ENCODE measurements at regions of chr12 and their contacts with region 1.

Region 1: DNA sequence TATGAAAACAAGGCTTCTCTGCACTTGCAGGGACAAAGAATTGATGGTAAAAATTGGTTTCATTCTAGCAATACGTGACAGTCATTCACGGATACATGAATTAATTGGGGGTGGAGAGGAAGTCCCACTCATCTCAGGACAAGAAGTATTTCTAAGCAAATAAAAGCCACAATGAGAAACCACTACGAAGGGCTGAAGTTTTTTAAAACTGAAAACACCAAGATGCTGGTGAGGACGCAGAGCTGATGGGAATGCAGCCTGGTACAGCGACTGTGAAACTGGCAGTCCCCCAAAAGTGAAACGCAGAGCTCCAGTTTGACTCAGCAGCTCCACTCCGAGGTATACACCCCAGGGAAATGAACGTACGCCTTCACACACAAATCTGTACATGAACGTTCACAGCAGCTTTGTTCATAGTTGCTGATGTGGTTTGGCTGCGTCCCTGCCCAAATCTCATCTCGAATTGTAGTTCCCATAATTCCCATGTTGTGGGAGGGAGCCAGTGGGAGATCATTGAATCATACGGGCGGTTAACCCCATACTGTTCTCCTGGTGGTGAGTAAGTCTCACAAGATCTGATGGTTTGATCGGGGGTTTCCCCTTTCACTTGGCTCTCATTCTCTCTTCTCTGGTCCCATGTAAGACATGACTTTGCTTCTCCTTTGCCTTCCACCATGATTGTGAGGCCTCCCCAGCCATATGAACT is 89.0 kb downstream of the SCARB1 start:
- DNase-seq: peak; percentile 96
- H3K4me3 Mint-ChIP-seq: no peak overlapping the region
- H3K27ac Mint-ChIP-seq: peak overlapping the region; percentile 93
- H3K4me1 Mint-ChIP-seq: peaks cover 40% of the 10 kb centered on the region
- H3K27me3 Mint-ChIP-seq: peaks cover 15% of the 10 kb centered on the region

Region 2: GRCh38 chr12:124453419-124454351 is 320.9 kb before region 1 on chr12:
- CTCF ChIA-PET with region 1: interaction called, 3 read pairs
- intact Hi-C with region 1: loop called (anchors 1 kb)
- DNase-seq: peak; percentile 93
- H3K4me3 Mint-ChIP-seq: no peak overlapping the region
- H3K27ac Mint-ChIP-seq: no peak overlapping the region
- H3K4me1 Mint-ChIP-seq: peaks cover 57% of the 10 kb centered on the region
- H3K27me3 Mint-ChIP-seq: no peaks in the 10 kb centered on the region

Region 3: GRCh38 chr12:124636138-124636978 is 138.3 kb before region 1 on chr12:
- CTCF ChIA-PET with region 1: no interaction called
- intact Hi-C with region 1: loop called (anchors 1 kb)
- DNase-seq: peak; percentile 89
- H3K4me3 Mint-ChIP-seq: no peak overlapping the region
- H3K27ac Mint-ChIP-seq: no peak overlapping the region
- H3K4me1 Mint-ChIP-seq: peaks cover 20% of the 10 kb centered on the region
- H3K27me3 Mint-ChIP-seq: no peaks in the 10 kb centered on the region

Region 4: GRCh38 chr12:124761871-124762270 is 12.7 kb before region 1 on chr12:
- CTCF ChIA-PET with region 1: interaction called, 14 read pairs
- intact Hi-C with region 1: loop called (anchors 1 kb)
- DNase-seq: peak; percentile 59
- H3K4me3 Mint-ChIP-seq: no peak overlapping the region
- H3K27ac Mint-ChIP-seq: no peak overlapping the region
- H3K4me1 Mint-ChIP-seq: peaks cover 36% of the 10 kb centered on the region
- H3K27me3 Mint-ChIP-seq: peaks cover 5% of the 10 kb centered on the region

Region 5: GRCh38 chr12:124898200-124898922 is 123.7 kb after region 1 on chr12:
- CTCF ChIA-PET with region 1: no interaction called
- intact Hi-C with region 1: loop called (anchors 1 kb)
- DNase-seq: peak; percentile 82
- H3K4me3 Mint-ChIP-seq: peak overlapping the region; percentile 34
- H3K27ac Mint-ChIP-seq: no peak overlapping the region
- H3K4me1 Mint-ChIP-seq: peaks cover 12% of the 10 kb centered on the region
- H3K27me3 Mint-ChIP-seq: no peaks in the 10 kb centered on the region

Region 6: DNA sequence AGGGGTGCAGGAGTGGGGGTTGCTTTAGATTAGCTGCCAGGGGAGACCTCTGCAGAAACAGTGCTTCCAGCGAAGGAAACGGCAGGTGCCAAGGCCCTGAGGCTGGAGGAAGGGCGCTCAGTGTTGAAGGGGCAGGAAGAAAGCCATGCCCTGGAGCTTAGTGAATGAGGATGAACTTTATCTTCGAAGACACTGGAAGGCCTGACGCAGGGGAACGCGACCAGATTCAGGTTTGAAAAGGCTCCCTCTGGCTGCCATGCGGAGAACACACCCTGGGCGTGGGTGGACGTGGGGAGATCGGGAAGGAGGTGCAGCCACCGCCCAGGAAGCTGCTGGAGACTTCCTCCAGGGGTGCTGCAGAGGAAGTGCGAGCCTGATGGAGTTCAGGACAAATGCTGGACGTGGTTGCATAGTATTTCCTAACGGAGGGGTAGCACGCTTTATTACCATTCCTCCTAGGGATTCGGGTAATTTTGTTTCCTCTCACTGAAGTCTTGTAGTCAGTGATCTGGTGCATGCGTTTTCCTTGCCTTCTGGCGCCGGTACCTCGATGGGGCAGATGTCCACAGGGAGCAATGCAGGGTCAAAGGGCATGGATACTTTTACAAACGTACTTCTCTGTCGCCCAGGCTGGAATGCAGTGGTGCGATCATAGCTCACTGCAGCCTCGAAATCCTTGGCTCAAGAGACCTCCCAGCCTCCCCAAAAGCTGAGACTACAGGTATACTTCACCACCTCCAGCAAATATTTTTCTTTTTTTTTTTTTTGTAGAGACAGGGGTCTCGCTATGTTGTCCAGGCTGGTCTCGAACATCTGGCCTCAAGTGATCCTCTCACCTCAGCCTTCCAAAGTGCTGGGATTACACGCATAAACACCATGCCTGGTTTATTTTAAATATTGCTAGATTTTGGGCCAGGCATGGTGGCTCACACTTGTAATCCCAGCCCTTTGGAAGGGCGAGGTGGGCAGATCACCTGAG is 166.2 kb after region 1 on chr12:
- CTCF ChIA-PET with region 1: interaction called, 4 read pairs
- intact Hi-C with region 1: loop called (anchors 1 kb)
- DNase-seq: peak; percentile 96
- H3K4me3 Mint-ChIP-seq: no peak overlapping the region
- H3K27ac Mint-ChIP-seq: no peak overlapping the region
- H3K4me1 Mint-ChIP-seq: peaks cover 8% of the 10 kb centered on the region
- H3K27me3 Mint-ChIP-seq: no peaks in the 10 kb centered on the region